Body of pancreas (tissue), 4 donors: ENCODE measurements at regions of chr11 and their contacts with region 1.

Region 1: DNA sequence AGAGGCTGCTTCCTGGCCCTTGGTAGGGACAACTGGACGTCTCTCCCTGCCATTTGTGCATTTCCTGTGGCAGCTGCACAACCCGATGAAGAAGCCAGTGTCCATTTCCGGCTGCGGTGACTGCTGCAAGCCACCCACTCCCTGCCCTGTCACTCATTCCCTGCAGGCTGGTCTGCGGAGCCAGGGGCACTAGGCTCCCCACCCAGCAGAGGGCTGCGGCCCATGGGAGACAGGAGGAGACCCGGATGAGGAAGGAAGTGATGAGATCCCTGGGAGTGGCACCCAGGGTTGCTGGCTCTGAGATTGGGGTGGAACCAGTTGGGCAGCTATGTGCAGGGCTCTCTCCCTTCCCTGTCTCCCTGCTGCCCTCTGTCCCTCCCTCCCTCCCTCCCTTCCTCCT is 10.0 kb upstream of the MYRF start:
- DNase-seq: no peak
- ATAC-seq: no peak
- H3K4me3 ChIP-seq: no peak overlapping the region
- H3K27ac ChIP-seq: no peak overlapping the region
- H3K4me1 ChIP-seq: peaks cover 2% of the 10 kb centered on the region
- H3K27me3 ChIP-seq: no peaks in the 10 kb centered on the region
- CTCF ChIP-seq: no peak
- POLR2A ChIP-seq: no peak

Region 2: GRCh38 chr11:61783717-61784519 is 41.5 kb after region 1 on chr11:
- intact Hi-C with region 1: loop called (anchors 5 kb)
- DNase-seq: no peak
- ATAC-seq: no peak
- H3K4me3 ChIP-seq: no peak overlapping the region
- H3K27ac ChIP-seq: no peak overlapping the region
- H3K4me1 ChIP-seq: no peaks in the 10 kb centered on the region
- H3K27me3 ChIP-seq: no peaks in the 10 kb centered on the region
- CTCF ChIP-seq: no peak
- POLR2A ChIP-seq: no peak